Activated CD4-positive, alpha-beta memory T cell treated with anti-CD3 and anti-CD28 coated beads for 36 hours (primary cell): ENCODE measurements at regions of chr17 and their contacts with region 1.

Region 1: DNA sequence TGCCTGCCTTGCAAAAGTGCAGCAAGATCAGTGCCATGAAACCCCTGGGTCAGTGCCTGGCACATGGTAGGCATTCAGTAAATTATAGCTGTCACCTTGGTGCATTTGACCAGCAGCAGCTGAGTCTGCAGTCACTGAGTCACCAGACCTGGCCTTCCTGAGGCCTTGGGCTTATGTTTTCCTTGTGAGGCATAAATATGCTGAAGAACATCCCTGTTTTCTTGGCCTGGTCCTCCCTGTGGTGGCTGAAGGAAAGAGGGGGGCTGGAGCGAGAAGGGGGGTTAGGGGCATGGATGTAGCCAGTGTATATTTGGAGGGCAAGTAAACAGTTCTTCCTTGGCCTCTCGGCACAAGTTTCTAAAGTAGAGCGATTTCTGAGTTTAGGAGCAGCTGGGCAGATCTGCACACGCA is 26.5 kb downstream of the EPN2 start:
- DNase-seq: no peak
- H3K4me3 Mint-ChIP-seq: no peak overlapping the region
- H3K27ac Mint-ChIP-seq: no peak overlapping the region
- H3K4me1 Mint-ChIP-seq: peaks cover 22% of the 10 kb centered on the region
- H3K27me3 Mint-ChIP-seq: peaks cover 5% of the 10 kb centered on the region

Region 2: DNA sequence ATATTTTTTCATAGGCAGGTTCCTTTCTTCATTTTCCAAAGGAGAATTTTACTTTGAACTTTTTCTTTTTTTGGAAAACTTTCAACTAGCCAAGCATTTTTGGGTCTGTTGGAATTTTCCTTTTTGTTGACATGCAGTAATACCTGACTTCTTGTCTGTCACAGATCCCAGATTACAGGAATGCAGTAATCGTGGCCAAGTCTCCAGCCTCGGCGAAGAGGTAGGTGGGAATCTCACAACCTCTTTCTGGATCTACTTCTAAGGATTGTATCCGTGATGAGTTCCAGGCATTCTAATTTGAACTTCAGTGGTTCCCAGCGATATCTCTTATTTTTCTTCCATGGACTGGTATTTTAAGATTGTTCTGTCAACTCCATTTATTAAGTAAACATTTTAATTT is 374.0 kb before region 1 on chr17:
- CTCF ChIA-PET with region 1: no interaction called
- POLR2A ChIA-PET with region 1: no interaction called
- intact Hi-C with region 1: no loop called
- DNase-seq: no peak
- H3K4me3 Mint-ChIP-seq: no peak overlapping the region
- H3K27ac Mint-ChIP-seq: no peak overlapping the region
- H3K4me1 Mint-ChIP-seq: no peaks in the 10 kb centered on the region
- H3K27me3 Mint-ChIP-seq: no peaks in the 10 kb centered on the region

Region 3: DNA sequence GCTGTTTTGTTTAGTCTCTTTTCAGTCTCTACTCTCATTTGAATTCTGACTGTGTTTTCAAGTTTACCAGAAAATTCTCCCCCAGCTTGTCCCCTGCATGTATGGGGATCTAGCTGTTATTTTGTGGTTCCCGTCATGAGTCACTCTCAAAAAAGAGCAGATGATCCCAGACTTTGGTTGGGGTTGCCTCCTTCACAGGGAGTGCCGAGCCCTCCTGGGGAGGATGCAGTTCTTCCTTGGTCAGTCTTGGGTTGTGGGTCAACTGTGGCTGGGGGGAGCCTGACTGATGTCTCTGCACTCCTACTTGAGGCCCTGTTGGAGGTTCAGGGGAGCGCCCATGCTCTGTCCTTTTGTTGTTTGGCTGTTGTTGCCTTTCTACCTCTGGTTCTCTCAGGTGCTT is 11.2 kb after region 1 on chr17:
- CTCF ChIA-PET with region 1: interaction called, 3 read pairs
- POLR2A ChIA-PET with region 1: interaction called, 4 read pairs
- intact Hi-C with region 1: loop called (anchors 1 kb)
- DNase-seq: no peak
- H3K4me3 Mint-ChIP-seq: no peak overlapping the region
- H3K27ac Mint-ChIP-seq: no peak overlapping the region
- H3K4me1 Mint-ChIP-seq: peaks cover 14% of the 10 kb centered on the region
- H3K27me3 Mint-ChIP-seq: peaks cover 5% of the 10 kb centered on the region

Region 4: DNA sequence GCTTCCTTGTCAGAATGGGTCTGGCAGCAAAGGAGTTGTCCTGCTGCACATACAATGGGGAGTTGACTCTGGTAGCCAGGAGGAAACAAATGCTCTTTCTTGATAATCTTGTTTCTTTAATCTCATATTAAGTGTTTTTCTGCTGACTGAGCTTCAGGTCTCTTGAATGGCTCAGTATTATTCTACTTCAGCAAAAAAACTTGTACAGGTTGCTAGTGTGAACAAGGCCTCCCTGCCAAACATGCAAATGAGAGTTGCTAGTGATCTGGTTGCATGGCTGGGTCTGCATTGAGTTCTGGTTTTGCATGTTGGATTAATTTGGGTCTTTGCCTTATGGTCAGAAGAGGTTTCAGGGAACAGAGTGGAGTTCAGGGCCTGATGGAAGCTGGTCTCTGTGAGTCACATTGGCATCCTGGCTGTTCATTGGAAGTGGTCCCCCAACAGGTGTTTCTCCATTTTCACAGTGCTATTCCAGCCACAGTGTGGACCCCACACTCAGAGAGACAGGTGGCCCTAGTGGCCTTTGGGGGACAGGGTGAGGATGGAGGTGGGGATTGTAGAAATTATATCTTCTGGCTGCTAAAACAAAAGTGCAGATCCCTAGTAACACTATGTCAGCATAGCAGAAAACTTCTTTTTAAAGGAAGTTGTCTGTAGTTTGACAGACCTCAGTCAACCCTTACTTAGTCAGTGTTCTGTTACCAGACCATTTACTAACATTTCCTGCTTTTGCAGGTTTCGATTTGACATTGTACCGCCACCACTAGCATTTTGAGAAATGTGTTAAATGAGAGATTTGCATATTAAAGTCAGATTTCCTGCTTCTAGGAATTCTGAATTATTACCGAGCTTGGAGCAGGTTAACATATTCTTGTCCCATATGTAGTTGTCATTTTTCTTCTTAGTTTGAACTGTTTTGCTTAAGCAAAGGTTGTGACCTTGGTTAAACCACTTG is 20.6 kb after region 1 on chr17:
- CTCF ChIA-PET with region 1: no interaction called
- POLR2A ChIA-PET with region 1: interaction called, 3 read pairs
- intact Hi-C with region 1: loop called (anchors 1 kb)
- DNase-seq: no peak
- H3K4me3 Mint-ChIP-seq: no peak overlapping the region
- H3K27ac Mint-ChIP-seq: peak overlapping the region; percentile 74
- H3K4me1 Mint-ChIP-seq: peaks cover 23% of the 10 kb centered on the region
- H3K27me3 Mint-ChIP-seq: peaks cover 5% of the 10 kb centered on the region